Activated T-helper 1 cell treated with anti-CD3 and anti-CD28 coated beads, Interleukin-12 subunit alpha, Interleukin-12 subunit beta, Interleukin-2, Interleukin-4 antibody, amounts not matched to agents 30 ng/mL and 10 ng/mL and 1 ng/mL, durations not matched to agents 14 hours and 24 hours and 36 hours (primary cell): ENCODE measurements at regions of chr22 and their contacts with region 1.

Region 1: DNA sequence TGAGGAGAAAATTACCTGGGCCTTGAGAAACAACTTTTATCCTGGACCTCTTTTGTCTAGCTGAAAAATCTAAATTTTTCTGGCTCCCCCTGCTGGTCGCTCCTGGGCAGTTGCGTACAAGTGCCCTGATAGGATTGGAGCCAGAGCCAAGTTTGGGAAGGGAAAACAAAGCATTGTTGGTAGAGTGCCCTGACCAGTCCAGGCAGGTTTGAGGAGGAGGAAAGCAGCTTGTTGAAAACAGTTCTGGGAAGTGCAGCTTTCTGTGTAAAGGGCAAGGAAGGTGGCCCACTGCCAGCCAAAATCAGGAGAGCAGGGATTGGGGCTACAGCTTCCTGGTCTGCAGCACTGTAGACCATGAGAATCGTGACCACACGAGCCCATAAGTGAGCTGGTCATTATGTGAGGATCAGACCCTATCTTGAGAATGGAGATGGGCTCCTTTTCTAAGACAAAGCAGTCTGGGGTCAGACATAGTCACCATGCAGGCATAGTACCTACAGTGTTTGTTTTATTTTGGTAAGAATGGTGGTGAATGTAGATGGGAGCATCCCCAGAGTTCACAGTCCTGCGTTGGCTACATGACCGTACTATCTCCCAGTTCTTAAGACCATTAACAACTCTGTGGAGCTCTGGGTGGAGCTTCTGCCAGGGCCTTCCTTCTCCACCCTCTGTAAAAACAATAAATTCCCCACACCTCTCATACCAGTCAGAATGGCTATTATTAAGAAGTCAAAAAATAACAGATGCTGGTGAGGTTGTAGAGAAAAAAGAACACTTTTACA is 21.3 kb upstream of the PIK3IP1 start:
- DNase-seq: peak; percentile 41
- H3K4me3 Mint-ChIP-seq: no peak overlapping the region
- H3K27ac Mint-ChIP-seq: no peak overlapping the region
- H3K4me1 Mint-ChIP-seq: peaks cover 9% of the 10 kb centered on the region
- H3K27me3 Mint-ChIP-seq: no peaks in the 10 kb centered on the region

Region 2: GRCh38 chr22:31272522-31273446 is 40.8 kb before region 1 on chr22:
- intact Hi-C with region 1: loop called (anchors 1 kb)
- DNase-seq: peak; percentile 26
- H3K4me3 Mint-ChIP-seq: no peak overlapping the region
- H3K27ac Mint-ChIP-seq: peak overlapping the region; percentile 52
- H3K4me1 Mint-ChIP-seq: peaks cover 14% of the 10 kb centered on the region
- H3K27me3 Mint-ChIP-seq: no peaks in the 10 kb centered on the region